ENCODE measurements at regions of chr3 and their contacts with region 1.

Region 1: DNA sequence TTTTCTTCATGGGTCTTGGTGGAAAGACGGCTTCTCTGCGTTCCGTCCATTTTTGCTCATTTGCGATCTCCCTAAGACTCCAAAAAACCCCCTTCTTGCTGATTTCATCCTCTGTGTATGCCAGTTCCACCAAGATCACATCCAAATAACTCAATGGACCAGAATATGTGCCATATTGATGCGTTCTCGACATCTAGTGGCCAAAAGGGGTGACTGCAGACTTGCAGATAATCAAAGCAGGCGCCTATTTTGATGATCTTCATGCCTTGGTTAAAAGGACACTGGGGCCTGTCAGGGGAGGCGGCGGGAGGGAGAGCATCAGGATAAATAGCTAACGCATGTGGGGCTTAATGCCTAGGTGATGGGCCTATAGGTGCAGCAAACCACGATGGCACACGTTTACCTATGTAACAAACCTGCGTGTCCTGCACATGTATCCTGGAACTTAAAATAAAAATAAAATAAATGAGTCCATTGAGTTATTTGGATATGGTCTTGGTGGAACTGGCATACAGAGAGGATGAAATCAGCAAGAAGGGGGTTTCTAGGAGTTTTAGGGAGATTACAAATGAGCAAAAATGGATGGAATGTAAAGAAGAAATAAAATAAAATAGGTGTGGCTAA is 104.2 kb upstream of the RAD18 start:
- DNase-seq: peak in 6 of 10 donors; percentile 35 to 85 (median 52)

Region 2: DNA sequence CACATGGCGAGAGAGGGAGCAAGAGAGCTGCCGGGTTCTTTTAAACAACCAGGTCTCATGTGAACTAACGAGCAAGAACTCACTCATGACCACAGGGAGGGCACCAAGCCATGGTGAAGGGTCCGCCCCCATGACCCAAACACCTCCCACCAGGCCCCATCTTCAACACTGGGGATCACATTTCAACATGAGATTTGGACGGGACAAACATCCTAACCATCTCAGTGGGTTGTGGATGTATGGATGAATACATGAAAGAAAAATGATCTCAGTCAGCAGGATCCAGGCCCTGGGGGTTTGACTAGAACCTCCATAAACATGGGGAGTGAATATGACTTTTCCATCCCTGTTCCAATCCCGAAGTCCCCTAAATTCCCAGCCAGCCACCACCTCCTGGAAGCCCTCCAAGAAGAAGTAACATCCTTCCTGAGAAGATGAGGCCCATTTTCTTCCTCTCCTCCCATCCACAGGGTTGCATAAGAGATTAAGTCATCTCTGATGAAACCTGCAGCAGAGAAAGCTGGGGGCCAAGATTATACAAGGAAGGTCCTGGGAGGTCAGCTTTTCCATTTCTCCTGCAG is 324.4 kb before region 1 on chr3:
- intact Hi-C with region 1: no loop called
- DNase-seq: peak in 1 of 10 donors; percentile 12

Region 3: DNA sequence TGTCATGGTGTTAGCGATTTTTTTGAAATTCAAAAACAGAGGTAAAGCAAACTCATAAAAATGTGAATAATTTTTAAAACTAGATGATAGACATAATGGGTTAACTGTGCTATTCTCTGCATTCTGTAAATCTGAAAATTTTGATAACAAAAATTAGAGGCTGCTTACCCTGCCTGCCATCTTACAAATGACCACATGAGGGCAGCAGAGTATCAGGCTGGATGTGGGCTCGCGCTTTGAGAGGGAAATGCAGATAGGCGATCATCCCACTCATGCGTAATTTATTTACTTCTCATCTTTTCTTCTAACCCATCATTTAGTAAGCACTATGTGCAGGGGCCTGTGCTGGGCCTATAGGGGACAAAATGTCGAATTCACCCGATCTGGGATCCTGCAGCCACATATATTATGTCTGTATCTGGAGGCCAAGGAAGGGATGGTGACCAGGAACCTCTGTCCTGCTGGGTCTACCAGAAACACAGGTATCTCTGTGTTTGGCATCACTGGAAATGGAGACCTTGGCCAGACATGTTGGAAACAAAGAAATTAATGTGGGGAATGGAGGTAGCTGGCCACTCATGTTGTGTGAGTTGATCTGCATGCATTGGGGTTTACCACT is 96.4 kb before region 1 on chr3:
- intact Hi-C with region 1: loop called (anchors 1 kb)
- DNase-seq: peak in 8 of 10 donors; percentile 52 to 93 (median 78)

Region 4: GRCh38 chr3:8987645-8988383 is 79.7 kb before region 1 on chr3:
- intact Hi-C with region 1: loop called (anchors 2 kb)
- DNase-seq: peak; percentile 60 to 96 (median 78)

Measured in posterior cingulate gyrus (tissue), 11 donors.